Endothelial cell of umbilical vein (primary cell): ENCODE measurements at regions of chr16 and their contacts with region 1.

Region 1: GRCh38 chr16:28823872-28824716 is 1.3 kb downstream of the ATXN2L start:
- DNase-seq: peak; percentile 99
- H3K4me3 ChIP-seq: peak overlapping the region; percentile 38 to 93 (median 77)
- H3K27ac ChIP-seq: peak overlapping the region; percentile 67
- H3K4me1 ChIP-seq: peaks cover 16% of the 10 kb centered on the region
- H3K27me3 ChIP-seq: no peaks in the 10 kb centered on the region
- CTCF ChIP-seq: peak in 1 of 2 donors; percentile 28
- POLR2A ChIP-seq: peak; percentile 75

Region 2: DNA sequence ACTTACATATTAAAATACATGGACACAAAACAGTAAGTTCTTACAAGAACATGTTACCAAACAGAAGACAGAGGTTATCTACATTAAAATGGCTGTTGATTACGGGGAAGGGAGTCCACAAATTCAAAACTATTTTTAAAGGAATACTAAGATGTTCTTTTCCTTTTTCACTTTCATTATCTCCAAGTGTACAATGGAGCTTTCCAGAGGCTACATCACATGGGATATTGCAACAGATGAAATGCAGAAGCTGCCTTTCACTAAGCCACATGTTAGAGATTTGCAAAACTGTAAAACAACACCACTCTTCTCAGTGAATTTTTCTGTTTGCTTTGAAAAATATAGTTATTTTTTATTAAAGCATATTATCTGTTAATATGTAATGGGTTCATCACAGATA is 666.0 kb before region 1 on chr16:
- CTCF ChIA-PET with region 1: no interaction called
- POLR2A ChIA-PET with region 1: no interaction called
- dilution Hi-C with region 1: no loop called
- intact Hi-C with region 1: no loop called
- DNase-seq: no peak
- H3K4me3 ChIP-seq: no peak overlapping the region
- H3K27ac ChIP-seq: no peak overlapping the region
- H3K4me1 ChIP-seq: no peaks in the 10 kb centered on the region
- H3K27me3 ChIP-seq: no peaks in the 10 kb centered on the region
- CTCF ChIP-seq: no peak
- POLR2A ChIP-seq: no peak

Region 3: GRCh38 chr16:28554634-28555423 is 269.3 kb before region 1 on chr16:
- CTCF ChIA-PET with region 1: no interaction called
- POLR2A ChIA-PET with region 1: no interaction called
- dilution Hi-C with region 1: no loop called
- intact Hi-C with region 1: no loop called
- DNase-seq: no peak
- H3K4me3 ChIP-seq: peak overlapping the region in 2 of 3 experiments; percentile 21 to 28
- H3K27ac ChIP-seq: no peak overlapping the region
- H3K4me1 ChIP-seq: peaks cover 5% of the 10 kb centered on the region
- H3K27me3 ChIP-seq: no peaks in the 10 kb centered on the region
- CTCF ChIP-seq: no peak
- POLR2A ChIP-seq: no peak

Region 4: GRCh38 chr16:28846080-28846932 is 22.2 kb after region 1 on chr16 and contains the start of gene TUFM:
- CTCF ChIA-PET with region 1: interaction called, 6 read pairs
- POLR2A ChIA-PET with region 1: interaction called, 13 read pairs
- dilution Hi-C with region 1: no loop called
- intact Hi-C with region 1: loop called (anchors 1 kb)
- DNase-seq: peak; percentile 99
- H3K4me3 ChIP-seq: peak within 1 kb of the TSS; percentile 54 to 84 (median 67)
- H3K27ac ChIP-seq: peak within 1 kb of the TSS; percentile 42
- H3K4me1 ChIP-seq: peaks cover 13% of the 10 kb centered on the region
- H3K27me3 ChIP-seq: no peaks in the 10 kb centered on the region
- CTCF ChIP-seq: peak; percentile 70 to 83
- POLR2A ChIP-seq: peak; percentile 87
- total RNA-seq, gene TUFM: 186 and 190 TPM in 2 replicates